Right cardiac atrium (tissue), 5 donors: ENCODE measurements at regions of chr12 and their contacts with region 1.

Region 1: DNA sequence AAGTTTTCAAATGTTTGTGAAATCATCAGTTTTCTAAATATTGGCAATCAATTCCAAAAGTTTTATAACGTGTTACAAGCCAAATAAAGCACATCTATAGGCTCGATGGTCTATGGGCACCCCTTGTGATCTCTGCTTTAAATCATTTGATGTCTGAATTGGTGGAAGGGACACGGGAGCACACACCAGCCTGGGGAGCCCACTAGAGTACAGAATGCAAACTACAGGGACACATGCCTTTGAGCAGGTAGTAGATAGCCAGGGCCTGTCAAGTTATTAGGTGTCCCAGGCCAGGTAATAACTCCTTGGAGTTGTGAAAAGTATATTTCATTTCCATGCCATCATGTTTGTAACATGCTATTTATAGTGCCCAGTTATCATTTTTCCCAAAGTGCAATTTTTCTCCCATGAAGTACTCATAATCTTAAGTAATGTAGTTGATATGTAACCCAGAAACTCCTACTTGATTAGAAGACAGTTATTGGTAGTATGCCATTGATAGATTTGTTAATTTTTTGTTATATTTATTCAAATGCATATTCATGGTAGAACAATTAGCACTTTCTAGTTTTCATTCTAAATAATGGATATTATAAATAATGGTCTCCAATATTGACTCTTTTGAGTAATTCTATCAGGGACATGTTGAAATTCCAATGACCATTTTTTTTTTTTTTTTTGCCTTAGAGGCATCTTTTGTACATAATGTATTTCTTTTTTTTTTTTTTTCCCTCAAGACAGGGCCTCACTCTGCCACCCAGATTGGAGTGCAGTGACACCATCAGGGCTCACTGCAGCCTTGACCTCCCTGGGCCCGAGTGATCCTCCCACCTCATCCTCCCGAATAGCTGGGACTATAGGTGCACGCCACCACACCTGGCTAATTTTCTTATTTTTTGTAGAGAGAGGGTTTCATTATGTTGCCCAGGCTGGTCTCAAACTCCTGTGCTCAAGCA is 96.9 kb upstream of the FGD4 start:
- DNase-seq: no peak
- ATAC-seq: peak in 1 of 2 donors; percentile 56
- H3K4me3 ChIP-seq: no peak overlapping the region
- H3K27ac ChIP-seq: no peak overlapping the region
- H3K4me1 ChIP-seq: no peaks in the 10 kb centered on the region
- H3K27me3 ChIP-seq: no peaks in the 10 kb centered on the region

Region 2: GRCh38 chr12:31650927-31651326 is 651.6 kb before region 1 on chr12:
- intact Hi-C with region 1: loop called in 3 of 4 experiments (anchors 5 to 10 kb)
- DNase-seq: no peak
- ATAC-seq: peak in 1 of 2 donors; percentile 40
- H3K4me3 ChIP-seq: no peak overlapping the region
- H3K27ac ChIP-seq: no peak overlapping the region
- H3K4me1 ChIP-seq: no peaks in the 10 kb centered on the region
- H3K27me3 ChIP-seq: no peaks in the 10 kb centered on the region

Region 3: GRCh38 chr12:31659087-31659933 is 643.2 kb before region 1 on chr12 and contains the start of gene ETFBKMT:
- intact Hi-C with region 1: loop called in 3 of 4 experiments (anchors 5 to 10 kb)
- DNase-seq: peak; percentile 85 to 93 (median 93)
- ATAC-seq: peak; percentile 96
- H3K4me3 ChIP-seq: peak within 1 kb of the TSS; percentile 88
- H3K27ac ChIP-seq: peak within 1 kb of the TSS; percentile 97
- H3K4me1 ChIP-seq: no peaks in the 10 kb centered on the region
- H3K27me3 ChIP-seq: no peaks in the 10 kb centered on the region
- total RNA-seq, gene ETFBKMT: 4.8 to 6.9 (median 5.8) TPM

Region 4: DNA sequence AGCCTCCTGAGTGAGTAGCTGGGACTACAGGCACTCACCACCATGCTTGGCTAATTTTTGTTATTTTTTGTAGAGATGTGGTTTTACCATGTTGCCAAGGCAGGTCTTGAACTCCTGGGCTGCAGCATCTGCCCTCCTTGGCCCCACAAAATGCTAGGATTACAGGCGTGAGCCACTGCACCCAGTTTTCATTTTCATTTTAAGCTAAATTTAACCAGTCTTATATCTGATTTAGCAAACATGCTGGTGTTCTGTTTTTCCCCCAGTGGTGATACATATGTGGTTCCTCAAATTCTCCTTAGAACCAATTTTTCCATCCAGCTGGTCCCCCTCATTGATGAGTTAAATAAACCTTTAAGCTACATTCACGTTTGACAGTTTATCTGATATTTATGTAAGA is 239.6 kb before region 1 on chr12:
- intact Hi-C with region 1: loop called in 2 of 4 experiments (anchors 5 to 10 kb)
- DNase-seq: no peak
- ATAC-seq: no peak
- H3K4me3 ChIP-seq: no peak overlapping the region
- H3K27ac ChIP-seq: no peak overlapping the region
- H3K4me1 ChIP-seq: no peaks in the 10 kb centered on the region
- H3K27me3 ChIP-seq: no peaks in the 10 kb centered on the region

Region 5: GRCh38 chr12:32069071-32069470 is 233.4 kb before region 1 on chr12:
- intact Hi-C with region 1: loop called in 2 of 4 experiments (anchors 5 to 10 kb)
- DNase-seq: no peak
- ATAC-seq: no peak
- H3K4me3 ChIP-seq: no peak overlapping the region
- H3K27ac ChIP-seq: no peak overlapping the region
- H3K4me1 ChIP-seq: no peaks in the 10 kb centered on the region
- H3K27me3 ChIP-seq: no peaks in the 10 kb centered on the region